Right ventricle myocardium superior (tissue), 1 donor: ENCODE measurements at regions of chr1 and their contacts with region 1.

Region 1: GRCh38 chr1:1777950-1778662 is at the start of gene NADK:
- DNase-seq: peak; percentile 82
- ATAC-seq: peak; percentile 73
- total RNA-seq, gene NADK: 23.0 TPM

Region 2: DNA sequence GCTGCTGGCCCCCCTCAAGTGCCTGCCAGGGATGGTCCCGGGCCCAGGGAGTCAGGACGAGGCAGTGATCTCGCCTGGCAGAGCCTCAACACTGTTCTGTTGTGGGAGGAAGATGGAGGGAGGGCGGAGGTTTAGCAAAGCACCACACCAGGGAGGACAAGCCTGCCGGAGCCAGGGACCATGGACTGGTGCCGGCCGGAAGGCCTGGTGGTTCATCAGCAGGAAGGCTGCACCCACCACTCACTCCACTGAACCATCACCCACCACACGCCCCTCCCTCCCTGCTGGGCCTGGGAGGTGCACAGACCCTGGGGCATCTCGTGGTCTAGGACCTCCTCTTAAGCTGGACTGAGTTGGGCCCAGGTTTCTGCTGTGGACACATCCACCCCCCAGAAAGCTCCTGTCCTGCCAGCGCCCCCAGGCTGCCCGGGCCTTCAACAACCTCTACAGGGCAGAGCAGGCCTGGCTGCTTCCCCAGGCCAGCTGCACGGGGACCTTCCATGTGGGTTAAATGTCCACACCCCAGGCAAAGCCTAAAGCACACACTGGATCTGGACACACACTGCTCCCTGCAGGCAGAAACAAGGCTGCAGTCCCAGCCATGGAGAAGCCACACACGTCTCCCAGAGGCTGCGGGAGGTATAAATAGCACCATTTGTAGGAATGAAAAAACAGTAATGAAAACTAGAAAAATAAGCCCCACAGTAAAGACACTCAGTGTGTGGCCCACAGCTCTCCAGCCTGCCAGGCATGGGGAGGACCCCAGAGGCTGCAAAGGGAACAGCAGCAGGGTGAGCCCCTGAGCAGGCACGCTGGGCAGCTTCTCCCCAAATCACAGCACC is 227.3 kb before region 1 on chr1:
- intact Hi-C with region 1: no loop called
- DNase-seq: peak; percentile 63
- ATAC-seq: peak; percentile 60

Region 3: DNA sequence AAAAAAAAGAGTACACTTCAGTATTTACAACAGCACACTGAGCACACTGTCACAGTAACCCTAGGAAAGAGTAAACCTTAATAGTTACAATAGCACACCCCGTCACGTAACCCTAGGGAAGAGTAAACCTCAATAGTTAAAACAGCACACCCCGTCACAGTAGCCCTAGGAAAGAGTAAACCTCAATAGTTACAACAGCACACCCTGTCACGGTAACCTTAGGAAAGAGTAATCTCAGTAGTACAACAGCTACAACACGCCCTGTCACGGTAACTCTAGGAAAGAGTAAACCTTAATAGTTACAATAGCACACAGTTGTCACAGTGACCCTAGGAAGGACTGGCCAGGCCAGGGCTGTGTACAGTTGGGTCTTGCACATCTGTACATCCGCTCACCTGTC is 56.9 kb before region 1 on chr1:
- intact Hi-C with region 1: no loop called
- DNase-seq: no peak
- ATAC-seq: no peak

Region 4: DNA sequence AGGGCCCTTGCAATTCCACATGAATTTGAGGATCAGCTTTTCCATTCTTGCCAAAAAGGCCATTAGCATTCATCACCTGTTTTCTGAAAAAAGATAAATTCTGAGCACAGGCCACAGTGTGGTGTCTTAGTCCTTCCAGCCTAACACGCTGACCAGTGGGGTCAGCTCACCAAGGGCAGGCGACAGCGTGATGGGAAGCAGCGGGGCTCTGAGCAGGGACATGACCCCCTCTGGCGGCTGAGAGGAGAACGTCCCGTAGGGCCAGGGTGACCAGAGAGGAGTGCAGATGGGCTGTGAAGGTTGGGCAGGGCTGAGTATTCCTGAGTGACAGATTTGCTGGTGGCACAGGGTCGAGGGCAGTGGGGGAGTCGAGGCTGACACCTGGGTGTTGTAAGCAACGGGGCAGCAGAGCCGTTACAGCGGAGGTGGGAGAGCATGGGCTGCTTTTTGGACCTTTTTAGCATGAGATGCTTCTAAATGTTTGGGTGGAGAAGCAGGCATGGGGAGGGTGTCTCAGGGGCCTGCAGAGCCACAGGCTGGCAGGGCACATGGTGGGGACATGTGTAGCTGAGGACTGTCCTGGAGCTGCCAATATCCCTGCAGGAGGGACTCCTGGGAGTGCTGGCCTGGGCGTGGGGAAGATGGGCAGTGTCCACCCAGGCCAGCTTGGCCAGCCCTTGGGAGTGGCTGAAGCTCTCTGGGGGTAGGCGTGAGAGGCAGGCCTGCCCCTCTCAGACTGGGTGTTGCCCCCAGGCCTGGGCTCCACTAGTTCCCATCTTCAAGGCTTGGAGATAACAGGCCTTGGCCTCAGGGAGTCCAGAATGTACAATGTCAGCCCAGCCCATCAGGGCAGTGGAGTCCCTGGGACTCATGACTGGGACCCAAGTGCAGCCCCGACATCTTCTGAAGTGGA is 128.3 kb after region 1 on chr1:
- intact Hi-C with region 1: loop called (anchors 5 kb)
- DNase-seq: peak; percentile 93
- ATAC-seq: peak; percentile 72